Vagina (tissue), 2 donors: ENCODE measurements at regions of chr6 and their contacts with region 1.

Region 1: DNA sequence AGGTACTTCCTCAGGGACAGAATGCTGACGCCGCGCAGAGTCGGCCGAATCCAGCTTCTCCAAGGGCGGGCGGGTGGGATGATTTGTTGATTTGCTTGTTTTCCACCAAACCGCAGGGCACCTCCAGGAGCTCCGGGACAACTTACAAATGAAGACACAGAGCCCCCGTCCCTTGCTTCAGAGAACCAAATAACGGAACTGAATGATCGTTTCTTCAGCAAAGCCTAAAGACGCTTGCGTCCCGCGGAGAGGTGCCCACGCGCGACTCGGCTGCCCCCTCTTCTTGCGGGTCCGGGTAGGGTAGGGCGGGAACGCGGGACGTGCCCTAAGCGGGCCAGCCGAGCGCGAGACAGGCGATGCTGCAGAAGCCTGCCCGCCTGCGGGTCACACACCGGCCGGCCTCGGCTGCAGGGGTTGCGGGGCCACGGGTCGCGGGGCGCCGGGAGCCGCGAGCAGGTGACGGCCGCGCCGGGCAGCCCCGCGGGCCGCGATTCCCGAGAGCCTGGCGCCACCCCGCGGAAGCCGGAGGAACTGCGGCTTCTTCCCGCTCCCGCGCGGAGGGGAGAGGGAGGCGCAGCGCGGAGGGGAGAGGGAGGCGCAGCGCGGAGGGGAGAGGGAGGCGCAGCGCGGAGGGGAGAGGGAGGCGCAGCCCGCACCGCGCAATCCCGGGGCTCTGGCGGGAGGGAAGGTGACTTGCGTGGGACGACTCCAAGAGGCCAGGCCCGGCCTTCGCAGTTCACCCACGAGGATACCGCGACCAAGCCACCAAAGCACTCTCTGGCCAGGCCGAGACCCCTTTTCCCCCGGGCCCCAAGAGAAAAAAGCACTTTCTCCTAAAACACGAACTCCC is 7.7 kb upstream of the FOXF2 start:
- DNase-seq: no peak
- H3K4me3 ChIP-seq: peak overlapping the region; percentile 13 to 34
- H3K27ac ChIP-seq: no peak overlapping the region
- H3K4me1 ChIP-seq: peaks cover 53% of the 10 kb centered on the region
- H3K27me3 ChIP-seq: peaks cover 32% of the 10 kb centered on the region
- CTCF ChIP-seq: peak; percentile 46 to 96 (median 64)
- POLR2A ChIP-seq: no peak

Region 2: DNA sequence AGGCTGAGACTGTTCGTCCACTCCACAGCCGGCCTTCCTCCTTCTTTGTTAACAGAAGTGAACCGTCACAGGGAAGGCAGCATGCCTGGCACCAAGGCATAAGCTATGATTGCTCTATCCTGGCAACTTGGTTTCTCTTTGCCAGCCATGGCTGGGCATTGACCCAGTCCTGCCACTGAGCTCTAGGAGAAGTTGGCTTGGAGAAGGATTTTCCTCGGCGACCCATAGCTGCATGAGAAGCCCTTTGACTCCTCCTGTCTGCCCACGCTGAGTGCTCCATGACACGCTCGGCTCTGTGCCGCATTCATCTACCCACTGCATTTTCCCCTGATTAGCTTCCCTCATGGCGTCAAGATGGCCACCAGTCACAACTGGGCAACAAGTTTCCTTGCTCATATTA is 576.9 kb before region 1 on chr6:
- intact Hi-C with region 1: loop called (anchors 5 kb)
- DNase-seq: peak in 1 of 2 donors; percentile 64
- H3K4me3 ChIP-seq: no peak overlapping the region
- H3K27ac ChIP-seq: no peak overlapping the region
- H3K4me1 ChIP-seq: no peaks in the 10 kb centered on the region
- H3K27me3 ChIP-seq: no peaks in the 10 kb centered on the region
- CTCF ChIP-seq: no peak
- POLR2A ChIP-seq: no peak